Ovary (tissue), 10 donors: ENCODE measurements at regions of chr4 and their contacts with region 1.

Region 1: DNA sequence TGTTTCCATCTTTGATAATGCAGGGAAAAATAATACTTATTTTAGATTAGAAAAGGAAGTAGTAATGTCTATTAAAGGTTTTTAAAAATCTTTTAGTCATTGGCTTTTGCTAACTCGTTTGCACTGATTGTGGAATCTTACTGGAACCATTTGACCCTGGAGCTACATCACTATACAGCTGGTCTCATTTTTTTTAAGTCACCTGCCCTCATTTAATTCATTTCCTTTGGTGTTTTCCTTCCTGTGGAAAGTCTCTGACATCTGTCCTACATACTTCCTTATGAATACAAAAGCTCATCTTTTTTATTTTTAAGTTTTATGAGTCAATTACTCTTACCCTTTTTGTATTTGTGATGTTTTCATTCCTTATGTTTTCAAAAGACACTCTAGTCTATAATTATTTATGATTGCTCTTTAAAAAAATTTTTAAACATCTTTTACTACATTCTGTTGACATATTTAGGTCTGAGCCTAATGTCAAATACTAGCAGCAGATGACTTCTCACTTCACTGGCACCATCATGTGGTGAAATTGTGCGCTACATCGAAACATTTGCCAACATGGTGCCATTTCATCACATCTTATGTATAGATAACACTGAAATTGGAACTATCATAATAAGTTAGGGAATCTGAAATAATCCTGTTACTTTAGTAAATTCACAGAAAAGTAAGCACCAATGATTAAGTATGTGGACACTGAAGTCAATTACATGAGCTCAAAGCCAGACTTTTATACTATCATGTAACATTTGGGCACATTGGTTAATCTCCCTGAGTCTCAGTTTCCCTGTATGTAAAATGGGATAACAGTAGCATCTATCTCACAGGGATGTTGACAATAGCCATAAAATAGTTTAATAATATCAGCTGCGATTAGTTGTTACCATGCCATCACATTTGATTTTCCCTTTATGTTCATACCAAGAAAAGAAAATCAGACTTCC is 9.4 kb upstream of the MMAA start:
- DNase-seq: peak; percentile 15 to 65 (median 53)
- H3K4me3 ChIP-seq: no peak overlapping the region
- H3K27ac ChIP-seq: no peak overlapping the region
- H3K4me1 ChIP-seq: no peaks in the 10 kb centered on the region
- H3K27me3 ChIP-seq: no peaks in the 10 kb centered on the region
- CTCF ChIP-seq: peak; percentile 16 to 59 (median 44)
- EP300 ChIP-seq: no peak
- POLR2A ChIP-seq: no peak

Region 2: GRCh38 chr4:145216535-145216934 is 393.2 kb before region 1 on chr4:
- intact Hi-C with region 1: loop called in 1 of 4 experiments (anchors 10 kb)
- DNase-seq: no peak
- H3K4me3 ChIP-seq: no peak overlapping the region
- H3K27ac ChIP-seq: no peak overlapping the region
- H3K4me1 ChIP-seq: no peaks in the 10 kb centered on the region
- H3K27me3 ChIP-seq: no peaks in the 10 kb centered on the region
- CTCF ChIP-seq: peak in 1 of 3 donors; percentile 14
- EP300 ChIP-seq: no peak
- POLR2A ChIP-seq: no peak

Region 3: GRCh38 chr4:145773581-145774234 is 164.0 kb after region 1 on chr4:
- intact Hi-C with region 1: no loop called
- DNase-seq: no peak
- H3K4me3 ChIP-seq: no peak overlapping the region
- H3K27ac ChIP-seq: no peak overlapping the region
- H3K4me1 ChIP-seq: no peaks in the 10 kb centered on the region
- H3K27me3 ChIP-seq: no peaks in the 10 kb centered on the region
- CTCF ChIP-seq: no peak
- EP300 ChIP-seq: no peak
- POLR2A ChIP-seq: no peak